IMR-90 (cell line): ENCODE measurements at regions of chr3 and their contacts with region 1.

Region 1: DNA sequence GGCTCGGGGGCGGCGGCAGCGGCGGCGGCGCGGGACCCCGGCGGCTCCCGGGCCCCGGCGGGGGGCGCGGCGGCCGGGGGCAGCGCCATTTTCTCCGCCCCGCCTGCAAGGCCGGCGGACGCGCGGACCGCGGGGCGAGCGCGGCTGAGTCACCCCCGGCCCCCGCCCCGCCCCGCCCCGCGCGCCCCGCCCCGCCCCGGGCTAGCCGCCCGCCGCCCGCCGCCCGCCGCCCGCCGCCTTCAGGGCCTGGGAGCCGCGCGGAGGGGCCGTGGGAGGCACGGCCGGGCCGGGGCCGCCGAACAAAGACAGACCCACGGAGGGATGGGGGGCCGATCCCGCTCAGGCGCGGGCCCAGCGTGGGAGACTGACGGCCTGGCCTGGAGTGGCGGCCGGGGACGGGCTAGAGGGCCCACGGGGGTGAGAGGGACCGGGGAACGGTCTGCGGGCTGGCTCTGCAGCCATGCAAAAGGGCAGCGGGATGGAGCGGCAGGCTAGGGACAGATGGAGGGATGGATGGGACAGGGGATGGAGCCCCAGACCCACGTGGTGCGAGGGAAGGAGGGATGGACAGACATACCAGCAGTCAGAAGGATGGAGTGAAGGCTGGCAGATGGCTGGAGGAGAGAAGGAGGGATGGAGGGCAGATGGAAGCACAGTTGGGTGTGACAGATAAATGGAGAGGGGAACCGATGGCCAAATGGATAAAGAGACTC is at the start of gene EIF4E3:
- DNase-seq: peak; percentile 4
- ATAC-seq: peak; percentile 86
- H3K4me3 ChIP-seq: peak within 1 kb of the TSS; percentile 70
- H3K27ac ChIP-seq: no peak within 1 kb of the TSS; the same call in 1 of the 2 replicates
- H3K4me1 ChIP-seq: peaks cover 2% of the 10 kb centered on the region; the same call in 1 of the 2 replicates
- H3K27me3 ChIP-seq: peaks cover 59% of the 10 kb centered on the region
- CTCF ChIP-seq: no peak
- POLR2A ChIP-seq: no peak
- RAD21 ChIP-seq: no peak
- total RNA-seq, gene EIF4E3: 0.72 and 0.83 TPM in 2 replicates

Region 2: DNA sequence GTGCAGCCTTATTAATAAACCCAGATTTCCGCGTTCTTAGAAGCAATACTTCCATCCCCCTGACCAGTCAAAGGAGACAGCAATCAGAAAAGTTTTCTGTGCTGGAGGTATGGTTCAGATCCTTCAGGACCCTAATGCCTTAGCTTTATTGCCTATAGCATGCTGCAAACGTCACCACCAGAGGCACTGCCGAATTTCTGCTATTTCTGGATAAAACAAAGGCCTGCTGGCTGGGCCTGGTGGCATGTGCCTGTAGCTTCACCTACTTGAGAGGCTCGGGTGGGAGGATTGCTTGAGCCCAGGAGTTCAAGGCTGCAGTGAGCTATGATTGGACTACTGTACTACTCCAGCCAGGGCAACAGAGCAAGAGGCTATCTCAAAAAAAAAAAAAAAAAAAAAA is 549.1 kb before region 1 on chr3:
- CTCF ChIA-PET with region 1: no interaction called
- POLR2A ChIA-PET with region 1: no interaction called
- dilution Hi-C with region 1: no loop called
- in situ Hi-C with region 1: no loop called
- intact Hi-C with region 1: no loop called
- DNase-seq: no peak
- ATAC-seq: no peak
- H3K4me3 ChIP-seq: no peak overlapping the region
- H3K27ac ChIP-seq: no peak overlapping the region
- H3K4me1 ChIP-seq: peaks cover 17% of the 10 kb centered on the region
- H3K27me3 ChIP-seq: no peaks in the 10 kb centered on the region
- CTCF ChIP-seq: no peak
- POLR2A ChIP-seq: no peak
- RAD21 ChIP-seq: no peak

Region 3: GRCh38 chr3:73070675-73071575 is 1345.5 kb after region 1 on chr3:
- CTCF ChIA-PET with region 1: no interaction called
- POLR2A ChIA-PET with region 1: interaction called, 6 read pairs
- dilution Hi-C with region 1: no loop called
- in situ Hi-C with region 1: loop called (anchors 10 kb)
- intact Hi-C with region 1: no loop called
- DNase-seq: peak; percentile 92
- ATAC-seq: peak; percentile 81
- H3K4me3 ChIP-seq: no peak overlapping the region
- H3K27ac ChIP-seq: peak overlapping the region; percentile 61
- H3K4me1 ChIP-seq: peaks cover 22% of the 10 kb centered on the region
- H3K27me3 ChIP-seq: no peaks in the 10 kb centered on the region
- CTCF ChIP-seq: no peak
- POLR2A ChIP-seq: no peak
- RAD21 ChIP-seq: no peak